ENCODE measurements at regions of chr15 and their contacts with region 1.

Region 1: DNA sequence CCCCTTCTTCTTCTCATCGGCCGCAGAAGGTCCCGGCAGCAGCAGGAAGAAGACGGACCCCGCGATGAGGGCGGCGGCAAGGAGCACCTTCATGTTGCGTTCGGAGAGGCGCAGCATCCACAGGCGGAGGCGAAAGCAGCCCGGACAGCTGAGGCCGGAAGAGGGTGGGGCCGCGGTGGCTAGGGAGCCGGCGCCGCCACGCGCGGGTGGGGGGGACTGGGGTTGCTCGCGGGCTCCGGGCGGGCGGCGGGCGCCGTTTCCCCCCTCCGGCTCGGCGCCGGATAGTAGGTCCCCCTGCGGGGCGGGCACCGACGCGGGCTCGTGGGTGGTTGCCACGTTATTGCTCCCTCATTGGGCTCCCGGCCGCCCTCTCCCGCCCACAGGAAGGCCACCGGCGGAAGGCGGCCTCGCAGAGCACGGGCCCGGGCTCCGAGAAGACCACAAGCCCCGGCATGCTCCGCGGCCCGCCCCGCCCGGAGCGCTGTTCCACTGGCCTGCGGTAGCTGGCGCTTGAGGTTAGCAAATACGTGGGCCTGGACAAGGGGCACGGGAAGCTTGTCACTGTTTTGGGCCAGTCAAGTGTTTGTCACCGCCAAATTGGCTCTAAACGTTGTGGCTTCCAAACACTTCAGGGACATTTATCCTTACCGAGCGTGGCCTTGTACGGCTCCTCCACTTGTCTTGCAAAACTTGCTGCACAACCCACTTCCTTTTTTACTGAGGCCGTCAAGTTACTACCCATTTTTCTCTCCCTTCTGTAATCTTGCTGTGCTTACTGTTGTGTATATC is at the start of gene PPIB:
- DNase-seq: peak; percentile 93 to 97
- ATAC-seq: peak; percentile 89 to 96 (median 91)
- H3K4me3 ChIP-seq: peak within 1 kb of the TSS; percentile 80
- H3K4me3 Mint-ChIP-seq: peak within 1 kb of the TSS; percentile 88
- H3K27ac ChIP-seq: peak within 1 kb of the TSS; percentile 84
- H3K27ac Mint-ChIP-seq: peak within 1 kb of the TSS; percentile 92 to 95
- H3K4me1 ChIP-seq: peaks cover 44% of the 10 kb centered on the region
- H3K4me1 Mint-ChIP-seq: peaks cover 43 to 44% of the 10 kb centered on the region in 2 donors
- H3K27me3 ChIP-seq: no peaks in the 10 kb centered on the region
- H3K27me3 Mint-ChIP-seq: no peaks in the 10 kb centered on the region
- CTCF ChIP-seq: no peak
- total RNA-seq, gene PPIB: 234 to 298 (median 251) TPM

Region 2: DNA sequence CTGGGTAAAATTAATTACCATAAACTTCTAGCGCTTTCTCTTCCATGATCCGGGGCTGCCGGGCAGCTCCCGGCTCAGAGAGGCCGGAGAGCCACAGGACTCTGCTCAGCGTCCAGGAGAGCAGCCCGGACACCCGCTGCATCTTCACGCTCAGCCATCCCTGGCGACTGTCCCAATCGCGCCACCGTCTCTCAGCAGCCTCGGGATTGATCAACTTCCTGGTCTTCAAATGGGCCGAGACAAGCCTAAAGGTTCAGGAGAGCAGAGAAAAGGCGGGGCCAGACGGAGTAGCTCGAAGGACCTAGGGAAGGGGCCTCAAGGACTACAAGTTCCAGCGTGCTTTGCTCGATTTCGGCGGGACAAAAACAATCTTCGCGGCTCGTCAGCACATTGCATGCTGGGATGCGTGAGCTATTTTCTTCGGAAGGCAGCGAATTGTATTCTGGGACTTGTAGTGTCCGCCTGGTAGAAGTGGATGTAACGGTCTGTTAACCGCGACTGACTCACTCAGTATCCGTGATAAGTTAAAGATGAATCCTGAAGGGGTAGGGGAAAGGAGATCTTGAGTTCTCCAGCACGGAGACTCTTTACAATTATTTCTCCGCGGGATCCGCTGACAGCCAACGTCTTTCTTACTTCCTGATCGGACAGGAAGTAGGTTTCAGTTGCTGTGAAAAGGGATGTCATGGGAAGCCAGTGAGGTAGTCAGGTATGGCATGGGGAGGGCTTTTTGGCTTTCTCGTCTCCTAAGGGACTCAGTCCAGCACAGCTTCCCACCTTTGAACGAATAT is 69.2 kb before region 1 on chr15 and contains the start of gene CIAO2A:
- intact Hi-C with region 1: loop called (anchors 1 kb)
- DNase-seq: peak; percentile 80 to 97
- ATAC-seq: peak; percentile 72 to 83 (median 75)
- H3K4me3 ChIP-seq: peak within 1 kb of the TSS; percentile 74
- H3K4me3 Mint-ChIP-seq: peak within 1 kb of the TSS; percentile 100
- H3K27ac ChIP-seq: peak within 1 kb of the TSS; percentile 93
- H3K27ac Mint-ChIP-seq: peak within 1 kb of the TSS; percentile 98 to 99
- H3K4me1 ChIP-seq: peaks cover 52% of the 10 kb centered on the region
- H3K4me1 Mint-ChIP-seq: peaks cover 64 to 69% of the 10 kb centered on the region in 2 donors
- H3K27me3 ChIP-seq: no peaks in the 10 kb centered on the region
- H3K27me3 Mint-ChIP-seq: no peaks in the 10 kb centered on the region
- CTCF ChIP-seq: no peak
- total RNA-seq, gene CIAO2A: 20.2 to 23.9 (median 22.9) TPM

Region 3: DNA sequence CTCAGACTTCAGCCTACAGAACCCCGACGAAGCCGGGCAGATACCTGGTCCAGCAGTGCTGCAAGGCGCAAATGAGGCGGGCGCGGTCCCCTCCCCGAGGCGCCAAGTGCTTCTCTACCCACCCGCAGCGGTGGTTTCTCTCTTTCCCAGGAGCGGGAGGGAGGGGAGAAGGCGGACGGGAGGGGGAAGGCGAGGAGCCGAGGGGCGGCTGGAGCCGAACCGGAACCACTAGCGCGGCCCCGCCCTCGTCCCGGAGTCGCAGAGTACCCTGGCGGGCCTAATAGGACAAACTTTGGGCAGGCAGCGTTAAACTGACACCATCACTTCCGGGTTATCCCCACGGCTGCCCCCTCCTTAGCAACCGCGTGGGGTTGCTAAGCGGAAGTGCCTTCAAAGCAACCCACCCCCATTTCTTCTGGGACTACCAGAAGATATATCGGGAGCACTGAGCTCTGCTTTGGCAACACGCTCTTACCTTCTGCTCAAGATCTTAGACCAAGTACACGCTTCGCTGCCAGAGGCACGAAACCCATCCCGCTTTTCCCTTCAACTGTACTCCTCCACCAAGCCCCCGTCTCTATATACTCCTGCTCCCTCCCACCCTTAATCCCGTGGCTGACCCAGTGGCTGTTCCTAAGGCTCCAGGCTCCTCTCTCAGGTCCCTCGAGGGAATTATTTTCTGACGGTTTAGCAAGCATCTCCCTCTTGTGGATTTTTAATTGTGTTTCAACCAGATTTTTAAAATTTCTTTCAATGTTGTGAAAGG is 193.1 kb after region 1 on chr15 and contains the start of gene CSNK1G1:
- intact Hi-C with region 1: loop called (anchors 1 kb)
- DNase-seq: peak; percentile 83 to 97
- ATAC-seq: peak; percentile 97 to 99 (median 99)
- H3K4me3 ChIP-seq: peak within 1 kb of the TSS; percentile 84
- H3K4me3 Mint-ChIP-seq: peak within 1 kb of the TSS; percentile 91
- H3K27ac ChIP-seq: peak within 1 kb of the TSS; percentile 22
- H3K27ac Mint-ChIP-seq: peak within 1 kb of the TSS; percentile 79 to 85
- H3K4me1 ChIP-seq: peaks cover 8% of the 10 kb centered on the region
- H3K4me1 Mint-ChIP-seq: peaks cover 17 to 22% of the 10 kb centered on the region in 2 donors
- H3K27me3 ChIP-seq: no peaks in the 10 kb centered on the region
- H3K27me3 Mint-ChIP-seq: no peaks in the 10 kb centered on the region
- CTCF ChIP-seq: peak; percentile 40
- total RNA-seq, gene CSNK1G1: 26.2 to 36.8 (median 34.0) TPM

Region 4: DNA sequence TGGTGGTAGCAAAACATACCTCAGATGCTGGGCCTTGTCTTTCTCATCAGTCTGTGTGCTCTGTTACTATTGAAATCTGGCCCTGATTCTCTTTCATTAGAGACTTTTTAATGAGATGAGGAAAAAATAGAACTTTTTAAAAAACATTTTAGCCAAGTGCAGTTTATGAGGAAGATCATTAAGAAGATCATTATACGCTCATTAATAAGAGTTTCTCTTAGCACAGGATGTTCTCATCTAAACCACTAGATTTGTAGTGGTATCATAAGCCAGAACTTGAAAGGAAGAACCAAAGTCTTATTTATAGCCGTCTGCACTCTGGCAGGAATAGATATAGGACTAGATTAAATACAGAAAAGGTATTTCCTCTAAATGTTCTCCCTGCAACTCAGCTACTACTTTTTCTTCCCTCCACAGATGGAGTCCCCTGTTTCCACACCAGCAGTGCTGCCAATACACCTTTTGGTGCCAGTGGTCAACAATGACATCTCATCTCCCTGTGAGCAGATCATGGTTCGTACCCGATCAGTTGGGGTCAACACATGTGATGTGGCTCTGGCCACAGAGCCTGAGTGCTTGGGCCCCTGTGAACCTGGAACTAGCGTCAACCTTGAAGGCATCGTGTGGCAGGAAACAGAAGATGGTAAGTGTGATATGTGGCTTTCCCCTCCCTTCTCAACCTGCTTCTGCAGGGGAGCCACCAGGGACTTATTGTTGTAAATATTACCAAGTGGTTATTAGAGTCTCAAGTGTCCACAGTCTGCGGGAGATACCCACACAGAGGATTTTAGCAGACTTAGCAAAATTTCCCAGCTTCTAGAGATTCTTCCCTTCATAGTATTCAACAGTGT is 459.6 kb after region 1 on chr15:
- intact Hi-C with region 1: loop called (anchors 5 kb)
- DNase-seq: peak; percentile 62 to 82
- ATAC-seq: peak; percentile 80 to 92 (median 91)
- H3K4me3 ChIP-seq: no peak overlapping the region
- H3K4me3 Mint-ChIP-seq: peak overlapping the region; percentile 68
- H3K27ac ChIP-seq: peak overlapping the region; percentile 74
- H3K27ac Mint-ChIP-seq: peak overlapping the region; percentile 86 to 88
- H3K4me1 ChIP-seq: peaks cover 48% of the 10 kb centered on the region
- H3K4me1 Mint-ChIP-seq: peaks cover 80 to 89% of the 10 kb centered on the region in 2 donors
- H3K27me3 ChIP-seq: no peaks in the 10 kb centered on the region
- H3K27me3 Mint-ChIP-seq: no peaks in the 10 kb centered on the region
- CTCF ChIP-seq: no peak

Region 5: GRCh38 chr15:64883997-64884511 is 721.0 kb after region 1 on chr15:
- intact Hi-C with region 1: loop called (anchors 5 kb)
- DNase-seq: peak; percentile 78 to 87
- ATAC-seq: peak; percentile 48 to 66 (median 57)
- H3K4me3 ChIP-seq: no peak overlapping the region
- H3K4me3 Mint-ChIP-seq: peak overlapping the region; percentile 86
- H3K27ac ChIP-seq: peak overlapping the region; percentile 63
- H3K27ac Mint-ChIP-seq: peak overlapping the region; percentile 90 to 99
- H3K4me1 ChIP-seq: peaks cover 36% of the 10 kb centered on the region
- H3K4me1 Mint-ChIP-seq: peaks cover 27 to 31% of the 10 kb centered on the region in 2 donors
- H3K27me3 ChIP-seq: no peaks in the 10 kb centered on the region
- H3K27me3 Mint-ChIP-seq: no peaks in the 10 kb centered on the region
- CTCF ChIP-seq: no peak

Region 6: GRCh38 chr15:65638681-65639089 is 1475.6 kb after region 1 on chr15:
- intact Hi-C with region 1: no loop called
- DNase-seq: peak in 1 of 2 donors; percentile 86
- ATAC-seq: peak; percentile 81 to 91 (median 89)
- H3K4me3 ChIP-seq: no peak overlapping the region
- H3K4me3 Mint-ChIP-seq: no peak overlapping the region
- H3K27ac ChIP-seq: no peak overlapping the region
- H3K27ac Mint-ChIP-seq: no peak overlapping the region
- H3K4me1 ChIP-seq: no peaks in the 10 kb centered on the region
- H3K4me1 Mint-ChIP-seq: peaks cover 6 to 11% of the 10 kb centered on the region in 2 donors
- H3K27me3 ChIP-seq: no peaks in the 10 kb centered on the region
- H3K27me3 Mint-ChIP-seq: no peaks in the 10 kb centered on the region
- CTCF ChIP-seq: peak; percentile 83